Activated CD4-positive, alpha-beta T cell treated with anti-CD3 and anti-CD28 coated beads for 36 hours (primary cell): ENCODE measurements at regions of chr16 and their contacts with region 1.

Region 1: DNA sequence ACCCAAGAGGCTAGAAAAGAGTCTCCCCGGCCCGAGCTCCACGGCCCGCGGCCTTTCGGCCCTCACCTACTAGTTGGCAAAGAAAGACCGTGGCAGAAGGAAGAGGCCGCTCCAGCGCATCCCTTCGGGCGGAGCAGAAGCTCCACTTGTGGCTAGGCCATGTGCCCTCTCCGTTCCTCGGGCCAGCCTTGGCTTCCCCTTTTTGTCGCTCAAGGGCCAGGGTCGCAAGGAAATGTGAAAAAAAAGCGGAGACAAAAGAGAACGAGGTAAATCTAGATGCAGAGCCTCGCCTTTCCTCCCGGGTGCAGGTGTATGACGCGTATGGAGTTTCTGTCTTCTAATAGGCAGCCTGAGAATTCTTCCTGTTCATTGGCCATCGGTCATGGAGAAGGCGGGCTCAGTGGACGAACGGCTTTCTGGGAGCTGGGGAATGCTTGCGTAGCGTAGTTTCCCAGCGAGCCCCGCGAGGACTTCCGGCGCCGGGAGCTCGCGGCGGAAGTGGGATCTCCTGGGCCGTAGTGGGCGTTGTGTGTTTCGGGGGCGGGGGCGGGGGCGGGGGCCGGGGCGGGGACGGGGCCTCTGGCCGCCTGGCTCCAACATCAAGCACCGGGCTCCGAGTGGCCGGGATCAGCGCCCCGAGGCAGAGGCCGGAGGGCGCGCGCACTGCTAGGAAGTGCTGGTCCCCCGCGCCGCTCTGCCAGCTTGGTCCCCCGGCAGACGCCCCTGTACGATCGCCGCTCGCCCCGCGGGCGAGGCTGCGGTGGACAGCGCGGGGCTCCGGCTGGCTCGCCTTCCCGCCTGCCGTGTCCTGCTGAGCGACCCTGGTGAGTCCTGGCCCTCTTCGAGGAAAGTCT is at the start of gene ZNF213:
- DNase-seq: peak; percentile 96
- ATAC-seq: peak; percentile 97
- H3K4me3 Mint-ChIP-seq: peak within 1 kb of the TSS; percentile 98
- H3K27ac Mint-ChIP-seq: peak within 1 kb of the TSS; percentile 95
- H3K4me1 Mint-ChIP-seq: peaks cover 30% of the 10 kb centered on the region
- H3K27me3 Mint-ChIP-seq: no peaks in the 10 kb centered on the region
- total RNA-seq, gene ZNF213: 7.6 to 8.3 TPM

Region 2: GRCh38 chr16:2682209-2683021 is 452.4 kb before region 1 on chr16 and contains the start of gene KCTD5:
- CTCF ChIA-PET with region 1: no interaction called
- POLR2A ChIA-PET with region 1: no interaction called
- intact Hi-C with region 1: no loop called
- DNase-seq: peak; percentile 98
- ATAC-seq: peak; percentile 92
- H3K4me3 Mint-ChIP-seq: peak within 1 kb of the TSS; percentile 100
- H3K27ac Mint-ChIP-seq: peak within 1 kb of the TSS; percentile 98
- H3K4me1 Mint-ChIP-seq: peaks cover 28% of the 10 kb centered on the region
- H3K27me3 Mint-ChIP-seq: no peaks in the 10 kb centered on the region
- total RNA-seq, gene KCTD5: 24.0 to 26.2 TPM

Region 3: GRCh38 chr16:3099732-3100499 is 34.9 kb before region 1 on chr16:
- CTCF ChIA-PET with region 1: interaction called, 125 read pairs
- POLR2A ChIA-PET with region 1: interaction called, 3 read pairs
- intact Hi-C with region 1: loop called in 1 of 2 experiments (anchors 1 kb)
- DNase-seq: peak; percentile 99
- ATAC-seq: peak; percentile 84
- H3K4me3 Mint-ChIP-seq: peak overlapping the region; percentile 68
- H3K27ac Mint-ChIP-seq: peak overlapping the region; percentile 84
- H3K4me1 Mint-ChIP-seq: peaks cover 49% of the 10 kb centered on the region
- H3K27me3 Mint-ChIP-seq: no peaks in the 10 kb centered on the region

Region 4: DNA sequence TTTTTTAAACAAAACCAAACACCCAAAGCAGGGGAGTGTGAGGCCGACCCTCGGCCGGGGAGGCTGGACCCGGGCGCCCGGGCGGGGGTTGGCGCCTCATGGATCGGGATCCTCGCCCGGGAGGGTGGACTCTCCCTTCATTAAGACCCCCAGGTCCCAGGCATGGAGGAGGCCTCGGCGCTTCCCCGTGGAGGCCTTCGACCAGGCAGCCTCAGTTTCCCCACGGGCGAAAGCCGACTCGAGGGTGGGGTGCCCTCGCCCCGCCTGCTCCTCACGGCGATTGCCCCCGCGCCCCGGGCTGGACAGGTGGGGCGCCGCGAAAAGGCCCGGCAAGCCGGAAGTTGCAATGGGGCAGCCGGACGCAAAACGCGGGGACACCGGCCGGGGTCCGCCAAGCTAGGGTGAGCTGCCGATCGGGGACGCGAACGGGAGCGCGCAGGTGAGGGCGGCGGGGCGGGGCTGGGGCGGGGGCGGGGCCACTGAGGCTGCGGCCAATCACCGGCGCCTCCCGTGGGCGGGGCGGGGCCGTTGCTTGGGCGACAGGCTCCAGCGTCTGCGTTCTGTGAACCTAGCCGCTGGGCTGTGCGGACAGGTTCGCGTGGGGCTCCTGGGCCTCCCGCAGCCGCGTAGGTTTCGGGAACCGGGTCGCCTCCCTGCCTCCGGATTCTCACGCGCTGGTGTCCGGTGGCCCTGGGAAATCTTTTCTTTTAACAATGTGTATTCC is 28.4 kb before region 1 on chr16:
- CTCF ChIA-PET with region 1: interaction called, 125 read pairs
- POLR2A ChIA-PET with region 1: interaction called, 8 read pairs
- intact Hi-C with region 1: loop called in 1 of 2 experiments (anchors 1 kb)
- DNase-seq: peak; percentile 96
- ATAC-seq: peak; percentile 88
- H3K4me3 Mint-ChIP-seq: peak overlapping the region; percentile 76
- H3K27ac Mint-ChIP-seq: peak overlapping the region; percentile 94
- H3K4me1 Mint-ChIP-seq: peaks cover 31% of the 10 kb centered on the region
- H3K27me3 Mint-ChIP-seq: no peaks in the 10 kb centered on the region

Region 5: GRCh38 chr16:3158471-3159314 is 23.9 kb after region 1 on chr16:
- CTCF ChIA-PET with region 1: interaction called, 9 read pairs
- POLR2A ChIA-PET with region 1: interaction called, 10 read pairs
- intact Hi-C with region 1: no loop called
- DNase-seq: peak; percentile 91
- ATAC-seq: peak; percentile 75
- H3K4me3 Mint-ChIP-seq: peak overlapping the region; percentile 87
- H3K27ac Mint-ChIP-seq: peak overlapping the region; percentile 88
- H3K4me1 Mint-ChIP-seq: peaks cover 20% of the 10 kb centered on the region
- H3K27me3 Mint-ChIP-seq: peaks cover 7% of the 10 kb centered on the region

Region 6: DNA sequence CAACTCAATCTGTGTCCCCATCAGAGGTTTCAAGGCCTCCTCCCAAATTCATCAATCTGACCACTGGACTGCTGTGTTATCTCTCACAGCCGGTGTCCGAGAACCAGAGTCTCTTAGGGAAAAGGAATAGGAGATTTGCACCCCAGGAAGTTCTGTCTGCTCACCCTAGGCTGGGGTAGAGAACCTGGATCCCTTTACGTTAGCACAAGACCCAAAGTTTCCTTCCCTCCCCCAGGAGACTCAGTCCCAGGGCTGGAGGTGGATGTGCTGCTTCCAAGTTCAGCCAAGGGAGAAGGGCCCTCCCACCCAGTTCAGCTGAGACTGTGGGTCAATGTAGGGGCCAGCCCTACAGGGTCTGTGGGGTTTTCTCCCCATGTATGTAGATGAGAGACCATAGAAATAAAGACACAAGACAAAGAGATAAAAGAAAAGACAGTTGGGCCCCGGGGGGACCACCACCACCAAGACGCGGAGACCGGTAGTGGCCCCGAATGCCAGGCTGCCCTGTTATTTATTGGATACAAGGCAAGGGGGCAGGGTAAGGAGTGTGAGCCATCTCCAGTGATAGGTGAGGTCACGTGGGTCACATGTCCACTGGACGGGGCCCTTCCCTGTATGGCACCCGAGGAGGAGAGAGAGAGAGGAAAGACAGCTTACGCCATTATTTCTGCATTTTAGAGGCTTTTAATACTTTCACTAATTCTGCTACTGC is 30.5 kb after region 1 on chr16:
- CTCF ChIA-PET with region 1: interaction called, 27 read pairs
- POLR2A ChIA-PET with region 1: no interaction called
- intact Hi-C with region 1: loop called (anchors 1 kb)
- DNase-seq: no peak
- ATAC-seq: no peak
- H3K4me3 Mint-ChIP-seq: peak overlapping the region; percentile 32
- H3K27ac Mint-ChIP-seq: peak overlapping the region; percentile 68
- H3K4me1 Mint-ChIP-seq: peaks cover 10% of the 10 kb centered on the region
- H3K27me3 Mint-ChIP-seq: peaks cover 2% of the 10 kb centered on the region